ENCODE measurements at regions of chr5 and their contacts with region 1.

Region 1: GRCh38 chr5:157342822-157343402 is 77.0 kb downstream of the CYFIP2 start:
- DNase-seq: peak; percentile 52
- H3K4me3 Mint-ChIP-seq: no peak overlapping the region
- H3K27ac Mint-ChIP-seq: peak overlapping the region; percentile 91
- H3K4me1 Mint-ChIP-seq: peaks cover 39% of the 10 kb centered on the region
- H3K27me3 Mint-ChIP-seq: no peaks in the 10 kb centered on the region

Region 2: GRCh38 chr5:157328277-157328912 is 14.5 kb before region 1 on chr5:
- CTCF ChIA-PET with region 1: interaction called, 161 read pairs
- POLR2A ChIA-PET with region 1: no interaction called
- intact Hi-C with region 1: no loop called
- DNase-seq: peak; percentile 71
- H3K4me3 Mint-ChIP-seq: no peak overlapping the region
- H3K27ac Mint-ChIP-seq: peak overlapping the region; percentile 23
- H3K4me1 Mint-ChIP-seq: peaks cover 40% of the 10 kb centered on the region
- H3K27me3 Mint-ChIP-seq: no peaks in the 10 kb centered on the region

Region 3: GRCh38 chr5:157390551-157391297 is 47.8 kb after region 1 on chr5:
- CTCF ChIA-PET with region 1: interaction called, 5 read pairs
- POLR2A ChIA-PET with region 1: no interaction called
- intact Hi-C with region 1: loop called (anchors 1 kb)
- DNase-seq: peak; percentile 91
- H3K4me3 Mint-ChIP-seq: peak overlapping the region; percentile 49
- H3K27ac Mint-ChIP-seq: peak overlapping the region; percentile 98
- H3K4me1 Mint-ChIP-seq: peaks cover 39% of the 10 kb centered on the region
- H3K27me3 Mint-ChIP-seq: no peaks in the 10 kb centered on the region

Region 4: GRCh38 chr5:157431544-157432200 is 88.8 kb after region 1 on chr5:
- CTCF ChIA-PET with region 1: interaction called, 13 read pairs
- POLR2A ChIA-PET with region 1: no interaction called
- intact Hi-C with region 1: no loop called
- DNase-seq: peak; percentile 30
- H3K4me3 Mint-ChIP-seq: no peak overlapping the region
- H3K27ac Mint-ChIP-seq: no peak overlapping the region
- H3K4me1 Mint-ChIP-seq: peaks cover 8% of the 10 kb centered on the region
- H3K27me3 Mint-ChIP-seq: peaks cover 1% of the 10 kb centered on the region

Region 5: GRCh38 chr5:157471709-157472108 is 128.8 kb after region 1 on chr5:
- CTCF ChIA-PET with region 1: interaction called, 39 read pairs
- POLR2A ChIA-PET with region 1: no interaction called
- intact Hi-C with region 1: loop called (anchors 5 kb)
- DNase-seq: peak; percentile 40
- H3K4me3 Mint-ChIP-seq: no peak overlapping the region
- H3K27ac Mint-ChIP-seq: no peak overlapping the region
- H3K4me1 Mint-ChIP-seq: no peaks in the 10 kb centered on the region
- H3K27me3 Mint-ChIP-seq: no peaks in the 10 kb centered on the region

Region 6: GRCh38 chr5:157476702-157477408 is 133.9 kb after region 1 on chr5:
- CTCF ChIA-PET with region 1: interaction called, 39 read pairs
- POLR2A ChIA-PET with region 1: no interaction called
- intact Hi-C with region 1: loop called (anchors 5 kb)
- DNase-seq: peak; percentile 33
- H3K4me3 Mint-ChIP-seq: no peak overlapping the region
- H3K27ac Mint-ChIP-seq: peak overlapping the region; percentile 40
- H3K4me1 Mint-ChIP-seq: peaks cover 27% of the 10 kb centered on the region
- H3K27me3 Mint-ChIP-seq: no peaks in the 10 kb centered on the region